CD4-positive, alpha-beta T cell (primary cell): ENCODE measurements at regions of chr2 and their contacts with region 1.

Region 1: GRCh38 chr2:237674731-237675276 is 47.4 kb downstream of the LRRFIP1 start:
- DNase-seq: peak; percentile 70 to 97 (median 82)
- ATAC-seq: peak; percentile 59
- H3K4me3 ChIP-seq: peak overlapping the region; percentile 52
- H3K4me3 Mint-ChIP-seq: peak overlapping the region; percentile 82
- H3K27ac ChIP-seq: peak overlapping the region; percentile 97 to 99
- H3K27ac Mint-ChIP-seq: peak overlapping the region; percentile 96
- H3K4me1 ChIP-seq: peaks cover 51% of the 10 kb centered on the region
- H3K4me1 Mint-ChIP-seq: peaks cover 55% of the 10 kb centered on the region
- H3K27me3 ChIP-seq: no peaks in the 10 kb centered on the region
- H3K27me3 Mint-ChIP-seq: no peaks in the 10 kb centered on the region
- CTCF ChIP-seq: no peak

Region 2: DNA sequence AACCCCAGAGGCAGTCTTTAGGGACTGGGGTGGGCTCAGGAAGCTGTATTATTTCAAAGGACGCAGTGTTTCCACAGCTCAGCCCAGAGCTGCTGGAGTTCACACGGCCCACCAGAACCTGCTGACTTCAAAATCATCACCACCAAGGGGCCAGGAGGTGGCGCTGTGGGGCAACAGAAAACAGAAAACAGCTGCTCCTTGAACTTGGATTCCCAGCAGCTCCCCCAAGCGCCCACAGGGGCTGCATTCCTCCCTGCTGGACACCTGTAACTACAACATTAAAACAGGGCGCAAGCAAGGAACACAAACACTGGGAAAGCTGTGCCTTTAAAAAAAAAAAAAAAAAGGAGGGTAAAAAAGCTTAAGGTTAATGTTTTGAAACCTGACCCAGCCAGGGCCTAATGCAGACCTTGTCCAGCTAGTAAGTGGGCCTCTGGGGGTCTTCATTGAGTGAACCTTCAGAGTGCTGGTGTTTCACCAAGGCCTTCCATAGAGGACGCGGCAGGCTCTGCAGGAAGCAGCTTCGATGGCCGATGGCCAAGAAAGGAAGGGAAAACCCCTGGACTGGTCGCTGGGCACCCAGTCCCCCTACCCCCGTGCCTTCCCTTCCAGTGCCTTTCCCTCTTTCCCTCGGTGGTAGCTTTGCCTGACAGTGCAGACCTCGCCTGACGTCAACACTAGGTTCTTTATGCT is 161.9 kb before region 1 on chr2:
- CTCF ChIA-PET with region 1: interaction called, 9 read pairs
- POLR2A ChIA-PET with region 1: interaction called, 3 read pairs
- intact Hi-C with region 1: loop called (anchors 2 to 5 kb)
- DNase-seq: peak; percentile 66 to 88 (median 74)
- ATAC-seq: peak; percentile 80
- H3K4me3 ChIP-seq: no peak overlapping the region
- H3K4me3 Mint-ChIP-seq: no peak overlapping the region
- H3K27ac ChIP-seq: no peak overlapping the region
- H3K27ac Mint-ChIP-seq: no peak overlapping the region
- H3K4me1 ChIP-seq: peaks cover 7% of the 10 kb centered on the region
- H3K4me1 Mint-ChIP-seq: no peaks in the 10 kb centered on the region
- H3K27me3 ChIP-seq: peaks cover 0 to 4% of the 10 kb centered on the region in 2 experiments
- H3K27me3 Mint-ChIP-seq: peaks cover 1% of the 10 kb centered on the region
- CTCF ChIP-seq: peak; percentile 84

Region 3: DNA sequence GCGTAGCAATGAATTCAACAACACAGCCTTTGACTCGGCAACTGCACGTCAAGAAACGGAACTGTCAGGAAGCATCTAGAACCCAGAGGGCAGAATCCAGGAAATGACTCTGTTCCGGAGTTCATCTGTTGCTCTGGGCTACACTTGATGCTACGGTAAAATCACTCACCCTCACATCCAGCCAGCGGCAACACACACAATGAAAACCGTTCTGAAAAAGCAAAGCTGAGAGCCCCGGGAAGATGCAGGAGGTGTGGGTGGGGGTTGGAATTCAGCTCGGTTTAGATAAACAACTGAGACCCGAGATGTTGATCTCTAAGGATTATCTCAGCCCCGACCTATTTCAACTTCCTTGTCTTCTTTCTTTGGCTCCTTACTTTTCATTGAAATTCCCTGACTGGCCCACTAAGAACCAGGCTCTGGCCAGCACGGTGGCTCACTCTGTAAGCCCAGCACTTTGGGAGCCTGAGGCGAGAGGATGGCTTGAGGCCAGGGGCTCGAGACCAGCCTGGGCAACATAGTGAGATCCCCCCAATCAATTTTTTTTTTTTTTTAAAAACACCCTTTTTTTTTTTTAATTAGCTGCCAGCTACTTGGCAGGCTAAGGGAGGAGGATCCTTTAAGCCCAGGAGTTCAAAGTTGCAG is 71.0 kb before region 1 on chr2:
- CTCF ChIA-PET with region 1: interaction called, 4 read pairs
- POLR2A ChIA-PET with region 1: interaction called, 5 read pairs
- intact Hi-C with region 1: loop called in 1 of 2 experiments (anchors 5 kb)
- DNase-seq: peak; percentile 35 to 87 (median 56)
- ATAC-seq: peak; percentile 97
- H3K4me3 ChIP-seq: peak overlapping the region; percentile 22
- H3K4me3 Mint-ChIP-seq: peak overlapping the region; percentile 81
- H3K27ac ChIP-seq: peak overlapping the region; percentile 24 to 87
- H3K27ac Mint-ChIP-seq: peak overlapping the region; percentile 89
- H3K4me1 ChIP-seq: peaks cover 24% of the 10 kb centered on the region
- H3K4me1 Mint-ChIP-seq: peaks cover 28% of the 10 kb centered on the region
- H3K27me3 ChIP-seq: no peaks in the 10 kb centered on the region
- H3K27me3 Mint-ChIP-seq: no peaks in the 10 kb centered on the region
- CTCF ChIP-seq: no peak

Region 4: DNA sequence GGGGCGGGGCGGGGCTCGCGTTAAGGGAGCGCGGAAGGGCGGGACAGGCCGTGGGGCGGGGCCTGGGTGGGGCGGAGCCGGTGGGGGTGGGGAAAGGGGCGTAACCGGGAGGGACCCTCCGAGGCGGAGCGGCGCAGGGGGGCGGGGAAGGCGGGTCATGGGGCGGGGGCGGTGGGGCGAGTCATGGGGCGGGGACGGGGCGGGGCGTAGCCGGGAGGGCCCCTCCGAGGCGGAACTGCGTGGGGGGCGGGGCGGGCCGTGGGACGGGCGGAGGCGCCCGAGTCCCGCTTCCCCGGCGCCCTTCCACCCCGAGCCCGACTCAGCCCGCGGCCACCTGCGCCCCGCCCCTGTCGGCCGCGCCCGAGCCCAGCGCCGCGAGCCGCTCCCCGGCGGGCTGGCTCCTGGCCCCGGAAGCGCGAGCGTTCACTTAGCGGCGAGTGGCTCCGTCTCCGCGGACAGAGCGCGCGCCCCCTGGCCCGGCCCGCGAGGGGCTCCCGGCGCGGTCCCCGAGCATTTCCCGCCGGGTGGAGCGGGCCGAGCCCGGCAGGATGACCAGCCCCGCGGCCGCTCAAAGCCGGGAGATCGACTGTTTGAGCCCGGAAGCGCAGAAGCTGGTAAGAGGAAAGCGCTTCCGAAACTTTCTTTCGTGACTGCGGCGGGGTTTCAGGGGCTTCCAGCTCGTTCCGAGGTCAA is 17.2 kb after region 1 on chr2:
- CTCF ChIA-PET with region 1: interaction called, 254 read pairs
- POLR2A ChIA-PET with region 1: interaction called, 235 read pairs
- intact Hi-C with region 1: loop called (anchors 1 to 2 kb)
- DNase-seq: peak; percentile 90 to 98 (median 95)
- ATAC-seq: peak; percentile 48
- H3K4me3 ChIP-seq: peak overlapping the region; percentile 90
- H3K4me3 Mint-ChIP-seq: peak overlapping the region; percentile 89
- H3K27ac ChIP-seq: peak overlapping the region; percentile 87 to 96
- H3K27ac Mint-ChIP-seq: peak overlapping the region; percentile 93
- H3K4me1 ChIP-seq: peaks cover 77% of the 10 kb centered on the region
- H3K4me1 Mint-ChIP-seq: peaks cover 74% of the 10 kb centered on the region
- H3K27me3 ChIP-seq: no peaks in the 10 kb centered on the region
- H3K27me3 Mint-ChIP-seq: no peaks in the 10 kb centered on the region
- CTCF ChIP-seq: no peak

Region 5: GRCh38 chr2:237708065-237708398 is 33.2 kb after region 1 on chr2:
- CTCF ChIA-PET with region 1: interaction called, 23 read pairs
- POLR2A ChIA-PET with region 1: interaction called, 23 read pairs
- intact Hi-C with region 1: loop called (anchors 5 kb)
- DNase-seq: peak in 2 of 14 experiments; percentile 38 to 49
- ATAC-seq: no peak
- H3K4me3 ChIP-seq: no peak overlapping the region
- H3K4me3 Mint-ChIP-seq: peak overlapping the region; percentile 36
- H3K27ac ChIP-seq: no peak overlapping the region
- H3K27ac Mint-ChIP-seq: peak overlapping the region; percentile 93
- H3K4me1 ChIP-seq: peaks cover 72% of the 10 kb centered on the region
- H3K4me1 Mint-ChIP-seq: peaks cover 68% of the 10 kb centered on the region
- H3K27me3 ChIP-seq: no peaks in the 10 kb centered on the region
- H3K27me3 Mint-ChIP-seq: no peaks in the 10 kb centered on the region
- CTCF ChIP-seq: peak; percentile 18

Region 6: DNA sequence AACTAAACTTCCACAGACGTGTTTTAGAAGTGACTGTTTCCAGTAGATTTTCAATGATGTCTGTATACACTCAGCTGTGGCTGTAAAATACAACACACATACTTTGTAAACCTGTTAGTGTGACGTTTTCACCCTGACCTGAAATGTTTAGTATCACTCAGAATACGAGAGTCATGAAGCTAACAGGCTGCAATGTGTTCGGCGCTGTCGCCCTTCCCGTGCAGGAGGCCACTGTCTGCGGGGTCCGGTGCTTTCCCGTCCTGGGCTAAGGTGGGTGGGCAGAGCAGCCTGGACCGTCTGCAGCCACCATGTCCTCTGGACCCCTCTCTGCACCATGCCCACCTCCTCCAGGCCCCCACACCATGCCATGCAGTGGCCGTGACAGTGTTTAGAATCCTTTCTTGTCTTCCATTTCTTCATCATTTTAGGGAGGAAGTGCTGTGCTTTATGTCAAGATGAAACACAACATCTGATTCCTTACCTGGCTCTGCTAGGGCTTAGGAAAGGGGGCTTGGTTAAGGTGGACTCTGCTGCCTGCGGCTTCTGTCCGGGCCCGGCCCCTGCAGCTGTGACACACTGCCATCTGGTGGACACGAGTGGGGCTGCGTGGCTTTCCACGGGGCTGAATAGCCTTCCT is 69.9 kb after region 1 on chr2:
- CTCF ChIA-PET with region 1: interaction called, 101 read pairs
- POLR2A ChIA-PET with region 1: interaction called, 23 read pairs
- intact Hi-C with region 1: loop called (anchors 1 kb)
- DNase-seq: peak; percentile 58 to 87 (median 78)
- ATAC-seq: peak; percentile 75
- H3K4me3 ChIP-seq: no peak overlapping the region
- H3K4me3 Mint-ChIP-seq: peak overlapping the region; percentile 43
- H3K27ac ChIP-seq: no peak overlapping the region
- H3K27ac Mint-ChIP-seq: peak overlapping the region; percentile 78
- H3K4me1 ChIP-seq: peaks cover 40% of the 10 kb centered on the region
- H3K4me1 Mint-ChIP-seq: peaks cover 50% of the 10 kb centered on the region
- H3K27me3 ChIP-seq: no peaks in the 10 kb centered on the region
- H3K27me3 Mint-ChIP-seq: no peaks in the 10 kb centered on the region
- CTCF ChIP-seq: peak; percentile 98